ENCODE measurements at regions of chr22 and their contacts with region 1.

Region 1: DNA sequence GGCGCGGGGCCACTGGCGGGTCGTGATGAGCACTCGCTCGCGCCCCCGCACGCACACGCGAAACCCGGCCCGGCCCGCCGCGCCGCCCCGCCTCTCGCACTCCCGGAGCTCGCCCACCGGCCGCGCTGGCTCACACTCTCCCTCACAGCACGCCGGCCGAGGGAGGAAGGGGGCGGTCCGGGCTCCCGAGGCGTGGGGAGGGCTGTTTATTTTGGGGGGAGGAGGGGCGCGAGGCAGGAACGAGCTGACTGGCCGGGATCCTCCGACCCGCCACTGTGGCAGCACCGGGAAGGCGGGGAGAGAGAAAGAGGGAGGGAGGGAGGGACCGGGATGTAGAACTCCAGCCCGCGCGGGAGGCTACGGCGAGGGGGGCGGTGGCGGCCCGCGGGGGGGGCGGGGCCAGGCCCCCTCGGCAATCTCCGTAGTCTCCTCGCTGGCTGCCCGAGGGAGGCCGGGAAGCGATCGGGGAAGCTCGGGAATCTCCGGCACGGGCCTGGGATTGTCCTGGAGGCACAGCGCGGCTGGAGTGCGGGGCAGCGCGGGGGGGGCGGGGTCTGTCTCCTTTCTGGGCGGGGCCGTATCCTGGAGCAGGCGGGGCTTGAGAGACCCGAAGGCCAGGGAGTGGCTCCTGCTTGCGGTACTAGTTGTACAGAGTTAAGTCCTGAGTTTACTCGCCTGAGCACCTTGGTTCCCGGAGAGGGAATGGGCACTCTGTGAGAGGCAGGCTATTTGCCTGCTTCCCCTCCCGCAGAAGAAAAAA is at the start of gene RBFOX2:
- DNase-seq: peak; percentile 98 to 99
- ATAC-seq: peak; percentile 95 to 99 (median 96)
- H3K4me3 ChIP-seq: peak within 1 kb of the TSS; percentile 31 to 94 (median 87)
- H3K27ac ChIP-seq: peak within 1 kb of the TSS; percentile 64 to 93 (median 88)
- H3K4me1 ChIP-seq: peaks cover 0 to 43% (median 22%) of the 10 kb centered on the region in 9 donors
- H3K27me3 ChIP-seq: peaks cover 0 to 27% (median 0%) of the 10 kb centered on the region in 7 donors
- CTCF ChIP-seq: no peak
- total RNA-seq, gene RBFOX2: 68.3 to 105 (median 95.0) TPM

Region 2: GRCh38 chr22:35866651-35867050 is 162.2 kb before region 1 on chr22:
- intact Hi-C with region 1: no loop called
- DNase-seq: no peak
- ATAC-seq: peak in 4 of 8 donors; percentile 30 to 65 (median 48)
- H3K4me3 ChIP-seq: no peak overlapping the region
- H3K27ac ChIP-seq: peak overlapping the region in 6 of 10 donors; percentile 19 to 59 (median 37)
- H3K4me1 ChIP-seq: peaks cover 3 to 93% (median 72%) of the 10 kb centered on the region in 9 donors
- H3K27me3 ChIP-seq: no peaks in the 10 kb centered on the region
- CTCF ChIP-seq: no peak

Region 3: GRCh38 chr22:35930933-35931332 is 97.9 kb before region 1 on chr22:
- intact Hi-C with region 1: loop called in 3 of 10 experiments (anchors 5 to 10 kb)
- DNase-seq: peak in 1 of 2 donors; percentile 62
- ATAC-seq: peak; percentile 81 to 98 (median 95)
- H3K4me3 ChIP-seq: no peak overlapping the region
- H3K27ac ChIP-seq: no peak overlapping the region
- H3K4me1 ChIP-seq: peaks cover 0 to 17% (median 5%) of the 10 kb centered on the region in 9 donors
- H3K27me3 ChIP-seq: no peaks in the 10 kb centered on the region
- CTCF ChIP-seq: peak; percentile 44 to 88 (median 73)

Region 4: GRCh38 chr22:35938226-35938625 is 90.6 kb before region 1 on chr22:
- intact Hi-C with region 1: loop called in 3 of 10 experiments (anchors 5 to 10 kb)
- DNase-seq: no peak
- ATAC-seq: no peak
- H3K4me3 ChIP-seq: no peak overlapping the region
- H3K27ac ChIP-seq: no peak overlapping the region
- H3K4me1 ChIP-seq: peaks cover 0 to 19% (median 0%) of the 10 kb centered on the region in 9 donors
- H3K27me3 ChIP-seq: no peaks in the 10 kb centered on the region
- CTCF ChIP-seq: no peak

Region 5: DNA sequence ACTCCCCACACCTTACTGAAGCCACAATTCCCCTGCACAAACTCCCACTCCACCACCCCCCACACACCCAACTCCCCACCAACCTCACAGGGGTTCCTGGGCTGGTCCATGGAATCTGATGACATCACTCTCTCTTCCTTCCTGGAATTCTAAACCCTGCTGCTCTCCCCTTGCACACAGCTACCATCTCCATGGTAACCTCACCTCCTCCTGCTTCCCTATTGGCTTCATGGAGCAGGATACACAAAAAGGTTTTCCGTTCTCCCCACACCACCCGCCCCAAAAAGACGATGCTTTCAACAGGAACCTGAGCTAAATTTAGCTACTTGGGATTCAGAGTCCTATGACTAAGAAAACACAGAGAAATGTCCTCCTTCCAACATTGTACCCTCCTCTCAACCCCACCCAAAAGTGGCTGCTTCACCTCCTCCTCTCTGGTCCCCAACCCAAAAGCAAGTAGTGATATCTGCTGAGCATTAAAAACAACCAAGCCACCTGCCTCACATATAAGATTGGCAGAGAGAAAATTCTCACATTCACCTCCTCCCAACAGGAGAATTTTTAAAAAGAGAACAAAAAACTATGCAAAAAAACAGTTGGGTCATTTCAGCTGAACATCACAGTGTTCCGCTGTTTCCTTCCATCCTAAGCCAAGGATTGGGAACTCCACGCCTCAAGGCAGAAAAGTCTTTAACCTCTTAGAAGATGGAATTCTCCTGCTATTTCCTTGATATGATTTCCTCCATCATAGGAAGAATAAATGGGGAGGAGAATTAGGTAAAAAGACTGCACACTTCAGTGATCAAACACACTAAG is 67.1 kb before region 1 on chr22:
- intact Hi-C with region 1: loop called in 2 of 10 experiments (anchors 5 to 10 kb)
- DNase-seq: peak; percentile 23 to 87
- ATAC-seq: peak; percentile 90 to 98 (median 95)
- H3K4me3 ChIP-seq: peak overlapping the region in 5 of 10 donors; percentile 0 to 31 (median 13)
- H3K27ac ChIP-seq: peak overlapping the region; percentile 57 to 88 (median 74)
- H3K4me1 ChIP-seq: peaks cover 3 to 65% (median 41%) of the 10 kb centered on the region in 9 donors
- H3K27me3 ChIP-seq: no peaks in the 10 kb centered on the region
- CTCF ChIP-seq: no peak

Region 6: GRCh38 chr22:35971456-35972119 is 57.2 kb before region 1 on chr22:
- intact Hi-C with region 1: loop called in 3 of 10 experiments (anchors 5 to 10 kb)
- DNase-seq: peak in 1 of 2 donors; percentile 36
- ATAC-seq: peak in 7 of 8 donors; percentile 60 to 85 (median 77)
- H3K4me3 ChIP-seq: no peak overlapping the region
- H3K27ac ChIP-seq: peak overlapping the region; percentile 18 to 87 (median 66)
- H3K4me1 ChIP-seq: peaks cover 17 to 95% (median 61%) of the 10 kb centered on the region in 9 donors
- H3K27me3 ChIP-seq: no peaks in the 10 kb centered on the region
- CTCF ChIP-seq: no peak

Region 7: DNA sequence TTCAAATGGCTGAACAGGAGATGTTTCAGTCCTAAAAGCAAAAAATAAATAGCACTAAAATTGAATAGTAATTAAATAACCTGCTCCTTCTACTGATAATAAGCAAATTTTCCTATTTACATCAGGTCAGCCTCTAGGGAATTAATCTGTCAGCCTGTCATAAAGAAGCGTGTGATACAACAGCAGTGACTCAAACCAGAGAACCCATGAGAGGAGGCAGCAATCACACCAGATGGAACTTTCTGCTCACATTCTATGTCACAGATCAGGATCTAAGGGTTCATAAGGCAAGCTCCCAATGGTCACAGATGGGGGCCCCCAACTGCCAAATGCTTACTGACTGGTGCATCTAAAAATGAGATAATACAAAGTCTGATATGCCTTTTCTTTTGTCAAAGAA is 41.3 kb before region 1 on chr22:
- intact Hi-C with region 1: loop called in 1 of 10 experiments (anchors 5 kb)
- DNase-seq: no peak
- ATAC-seq: no peak
- H3K4me3 ChIP-seq: no peak overlapping the region
- H3K27ac ChIP-seq: peak overlapping the region in 1 of 10 donors; percentile 9
- H3K4me1 ChIP-seq: peaks cover 0 to 94% (median 38%) of the 10 kb centered on the region in 9 donors
- H3K27me3 ChIP-seq: no peaks in the 10 kb centered on the region
- CTCF ChIP-seq: no peak

Region 8: GRCh38 chr22:35998748-35999147 is 30.1 kb before region 1 on chr22:
- intact Hi-C with region 1: no loop called
- DNase-seq: no peak
- ATAC-seq: no peak
- H3K4me3 ChIP-seq: no peak overlapping the region
- H3K27ac ChIP-seq: no peak overlapping the region
- H3K4me1 ChIP-seq: peaks cover 14 to 70% (median 49%) of the 10 kb centered on the region in 9 donors
- H3K27me3 ChIP-seq: no peaks in the 10 kb centered on the region
- CTCF ChIP-seq: no peak

Region 9: DNA sequence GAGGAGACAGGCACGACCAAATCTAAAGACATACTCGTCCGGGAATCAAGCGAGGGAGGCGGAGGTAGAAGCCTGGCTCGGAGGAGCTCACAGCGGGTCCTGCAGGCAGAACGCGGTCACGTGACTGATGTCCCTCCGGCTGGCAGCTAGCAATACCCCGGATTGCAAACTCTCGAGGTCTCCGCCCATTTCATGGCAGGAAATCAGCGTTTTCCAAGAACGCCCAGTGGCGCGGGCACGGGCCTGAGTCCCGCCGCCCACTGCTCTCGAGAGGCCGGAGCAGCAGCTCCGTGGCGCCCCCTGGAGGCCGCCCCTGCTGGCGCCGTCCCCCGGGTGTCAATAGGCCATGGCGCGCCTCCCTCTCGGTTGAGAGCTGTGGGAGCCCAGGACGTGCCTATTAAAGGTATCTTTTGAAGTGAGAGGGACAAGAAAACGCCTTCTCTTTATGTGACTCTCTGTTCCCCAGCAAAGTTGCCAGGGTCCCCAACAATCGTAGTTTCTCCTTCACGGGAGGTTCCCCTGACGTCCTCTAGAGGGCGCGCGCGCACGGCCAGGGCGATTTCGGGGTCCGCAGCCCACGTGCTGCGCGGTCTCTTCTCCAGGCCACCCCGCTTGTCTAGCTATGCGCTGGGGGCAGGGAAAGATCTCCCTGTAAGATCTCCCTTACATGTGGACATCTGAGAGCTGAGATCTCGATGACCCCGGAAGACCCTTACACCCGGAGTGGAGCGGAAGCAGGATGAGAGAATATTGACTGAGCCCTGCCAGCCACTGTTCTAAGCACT is 37.1 kb after region 1 on chr22:
- intact Hi-C with region 1: loop called in 2 of 10 experiments (anchors 1 to 5 kb)
- DNase-seq: peak; percentile 87 to 92
- ATAC-seq: peak; percentile 88 to 96 (median 95)
- H3K4me3 ChIP-seq: peak overlapping the region; percentile 30 to 73 (median 57)
- H3K27ac ChIP-seq: peak overlapping the region; percentile 66 to 93 (median 86)
- H3K4me1 ChIP-seq: peaks cover 0 to 19% (median 7%) of the 10 kb centered on the region in 9 donors
- H3K27me3 ChIP-seq: no peaks in the 10 kb centered on the region
- CTCF ChIP-seq: peak; percentile 99 to 100 (median 100)

Measured in heart right ventricle (tissue), 16 donors.